Activated CD8-positive, alpha-beta T cell treated with anti-CD3 and anti-CD28 coated beads, Interleukin-2, amount 10 ng/mL, durations not matched to agents 7 days and 5 days (primary cell): ENCODE measurements at regions of chr19 and their contacts with region 1.

Region 1: DNA sequence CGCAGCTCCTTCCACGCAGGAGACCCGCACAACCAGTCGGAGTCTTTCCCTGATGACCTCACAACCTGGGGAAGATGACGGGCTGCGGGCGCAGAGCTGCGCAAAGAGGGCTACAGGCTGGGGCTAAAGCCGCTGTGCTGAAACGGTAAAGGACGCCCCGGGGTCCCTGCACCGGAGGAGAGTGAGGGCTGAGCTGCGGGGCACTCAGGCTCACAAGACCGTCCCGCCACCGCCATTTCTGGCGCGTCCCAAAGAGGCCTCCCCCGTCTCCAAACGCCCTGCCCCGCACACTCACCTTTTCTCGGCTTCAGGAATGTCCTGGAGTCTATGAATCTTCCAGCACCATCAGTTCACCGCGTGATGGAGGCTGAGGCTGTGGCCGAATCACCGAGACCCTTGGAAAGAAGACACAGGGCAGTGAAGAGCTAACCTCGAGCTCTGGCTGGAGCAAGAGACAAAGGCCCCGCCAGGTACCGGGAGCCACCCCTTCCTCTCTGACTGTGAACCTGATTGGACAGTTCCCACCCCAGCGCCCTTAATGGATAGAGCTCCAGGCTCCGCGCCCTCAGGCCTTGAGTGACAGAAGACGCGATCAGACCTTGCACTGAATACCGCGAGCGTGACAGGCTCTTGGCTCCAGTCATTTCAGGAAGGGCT is 41.8 kb upstream of the ZNF429 start:
- DNase-seq: peak; percentile 83
- ATAC-seq: peak; percentile 99
- H3K4me3 Mint-ChIP-seq: peak overlapping the region; percentile 91
- H3K27ac Mint-ChIP-seq: peak overlapping the region; percentile 89
- H3K4me1 Mint-ChIP-seq: peaks cover 9% of the 10 kb centered on the region
- H3K27me3 Mint-ChIP-seq: no peaks in the 10 kb centered on the region

Region 2: DNA sequence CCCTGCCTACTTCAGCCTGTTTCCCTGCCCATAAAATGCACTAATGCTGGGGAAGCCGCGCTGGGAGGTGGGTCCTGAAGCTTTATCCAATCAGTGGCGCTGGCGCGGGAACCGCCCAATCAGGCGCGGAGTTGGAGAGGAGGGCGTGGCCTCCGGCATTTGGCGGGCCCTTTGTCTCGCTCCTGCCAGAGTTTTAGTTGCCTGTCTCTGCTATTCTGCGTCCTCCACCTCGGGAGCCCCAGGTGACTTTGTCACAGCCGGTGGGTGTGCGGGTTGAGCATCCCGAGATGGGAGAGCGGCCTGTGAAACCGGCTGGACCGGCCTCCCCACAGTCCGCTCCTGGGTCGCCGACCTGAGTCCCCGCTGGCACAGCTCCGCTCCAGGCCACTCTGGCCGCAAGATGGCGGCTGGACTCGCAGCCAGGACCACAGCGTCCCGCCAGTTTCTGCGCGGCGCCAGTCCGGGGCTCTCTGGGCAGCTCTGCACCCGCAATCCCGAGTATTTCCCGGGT is 11.1 kb after region 1 on chr19:
- CTCF ChIA-PET with region 1: no interaction called
- POLR2A ChIA-PET with region 1: interaction called, 15 read pairs
- DNase-seq: peak; percentile 91
- ATAC-seq: peak; percentile 100
- H3K4me3 Mint-ChIP-seq: peak overlapping the region; percentile 83
- H3K27ac Mint-ChIP-seq: peak overlapping the region; percentile 82
- H3K4me1 Mint-ChIP-seq: peaks cover 8% of the 10 kb centered on the region
- H3K27me3 Mint-ChIP-seq: no peaks in the 10 kb centered on the region